PC-3 (cell line): ENCODE measurements at regions of chr7 and their contacts with region 1.

Region 1: DNA sequence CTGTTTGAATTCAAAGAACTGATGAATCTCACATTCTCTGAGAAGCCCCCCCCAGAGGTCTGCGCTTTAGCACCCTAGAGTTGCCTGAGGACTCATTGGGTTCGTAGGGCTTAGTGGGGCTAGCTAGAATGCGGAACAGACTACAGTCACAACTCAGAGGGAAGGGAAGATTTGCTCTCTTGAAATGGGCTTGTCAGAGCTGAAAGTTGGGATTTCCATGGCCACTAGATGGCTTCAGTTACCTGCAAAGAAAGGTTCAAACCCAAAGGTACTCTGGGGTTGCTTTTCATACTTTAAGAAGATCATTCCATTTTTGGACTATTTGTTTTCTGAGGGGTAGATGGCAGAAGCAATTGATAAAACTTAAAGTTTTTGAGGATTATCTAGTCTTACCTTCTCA is 205.0 kb downstream of the BBS9 start:
- DNase-seq: peak; percentile 58
- ATAC-seq: peak; percentile 74
- H3K4me3 ChIP-seq: no peak overlapping the region
- H3K27ac ChIP-seq: no peak overlapping the region
- H3K4me1 ChIP-seq: no peaks in the 10 kb centered on the region
- H3K27me3 ChIP-seq: no peaks in the 10 kb centered on the region
- CTCF ChIP-seq: peak; percentile 75

Region 2: GRCh38 chr7:33040803-33041516 is 293.4 kb before region 1 on chr7:
- CTCF ChIA-PET with region 1: no interaction called
- POLR2A ChIA-PET with region 1: no interaction called
- intact Hi-C with region 1: no loop called
- DNase-seq: peak; percentile 86
- ATAC-seq: peak; percentile 96
- H3K4me3 ChIP-seq: peak overlapping the region; percentile 53
- H3K27ac ChIP-seq: peak overlapping the region; percentile 40
- H3K4me1 ChIP-seq: peaks cover 67% of the 10 kb centered on the region
- H3K27me3 ChIP-seq: no peaks in the 10 kb centered on the region
- CTCF ChIP-seq: no peak

Region 3: GRCh38 chr7:33261585-33261984 is 72.8 kb before region 1 on chr7:
- CTCF ChIA-PET with region 1: no interaction called
- POLR2A ChIA-PET with region 1: no interaction called
- intact Hi-C with region 1: no loop called
- DNase-seq: no peak
- ATAC-seq: peak; percentile 56
- H3K4me3 ChIP-seq: no peak overlapping the region
- H3K27ac ChIP-seq: no peak overlapping the region
- H3K4me1 ChIP-seq: no peaks in the 10 kb centered on the region
- H3K27me3 ChIP-seq: no peaks in the 10 kb centered on the region
- CTCF ChIP-seq: no peak

Region 4: DNA sequence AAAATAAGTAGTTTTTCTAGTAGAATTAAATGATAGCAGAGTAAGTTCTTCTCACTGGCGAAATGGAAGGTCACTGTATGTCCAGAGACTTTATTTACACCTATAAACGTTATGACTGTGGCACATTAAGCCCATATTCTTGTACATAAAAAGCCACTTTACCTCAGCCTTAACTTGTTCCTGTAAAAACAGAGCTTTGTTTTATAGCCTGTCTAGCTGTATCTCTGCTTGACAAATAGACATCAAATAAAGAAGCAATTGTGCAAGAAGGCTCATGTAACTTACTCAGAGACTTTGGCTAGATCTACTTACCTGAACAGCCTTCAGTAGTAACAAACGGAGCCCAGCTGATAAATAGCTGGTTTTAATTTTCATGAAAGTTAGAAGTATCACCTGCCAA is 246.9 kb after region 1 on chr7:
- CTCF ChIA-PET with region 1: no interaction called
- POLR2A ChIA-PET with region 1: no interaction called
- intact Hi-C with region 1: loop called (anchors 10 kb)
- DNase-seq: peak; percentile 15
- ATAC-seq: peak; percentile 70
- H3K4me3 ChIP-seq: no peak overlapping the region
- H3K27ac ChIP-seq: no peak overlapping the region
- H3K4me1 ChIP-seq: peaks cover 11% of the 10 kb centered on the region
- H3K27me3 ChIP-seq: no peaks in the 10 kb centered on the region
- CTCF ChIP-seq: no peak

Region 5: DNA sequence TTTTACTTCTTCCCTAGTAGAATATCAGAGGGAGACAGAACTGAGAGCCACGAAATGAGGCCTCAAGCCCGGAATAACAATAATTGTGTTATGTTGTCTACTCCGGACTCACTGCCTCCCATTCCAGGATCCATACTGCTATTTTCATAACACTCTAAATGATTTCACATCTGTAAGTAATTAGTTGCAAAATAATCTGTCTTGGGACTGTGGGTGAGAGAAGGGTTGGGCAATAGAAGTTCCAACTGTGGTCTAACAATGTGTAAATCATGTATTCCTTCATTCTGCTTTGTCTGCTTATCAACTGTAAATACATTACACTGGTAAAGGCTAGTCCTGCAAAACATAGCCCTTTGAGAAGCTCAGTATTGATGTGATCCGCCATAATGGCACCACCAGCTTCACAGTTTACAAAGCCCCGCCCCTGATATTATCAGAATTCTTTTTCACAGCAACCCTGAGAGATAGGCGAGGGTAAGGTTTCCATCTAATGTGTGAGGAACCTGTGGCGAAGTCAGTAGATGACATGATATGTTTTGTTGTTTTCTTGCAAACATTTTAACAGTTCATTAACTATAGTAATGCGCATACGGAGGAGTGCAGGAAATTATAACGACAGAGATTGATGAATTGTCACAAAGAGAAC is 305.3 kb after region 1 on chr7:
- CTCF ChIA-PET with region 1: no interaction called
- POLR2A ChIA-PET with region 1: no interaction called
- intact Hi-C with region 1: no loop called
- DNase-seq: no peak
- ATAC-seq: no peak
- H3K4me3 ChIP-seq: no peak overlapping the region
- H3K27ac ChIP-seq: no peak overlapping the region
- H3K4me1 ChIP-seq: 0 out of 2 replicates have a peak, but pooled peaks cover 3% of the 10 kb centered on the region
- H3K27me3 ChIP-seq: no peaks in the 10 kb centered on the region
- CTCF ChIP-seq: no peak

Region 6: DNA sequence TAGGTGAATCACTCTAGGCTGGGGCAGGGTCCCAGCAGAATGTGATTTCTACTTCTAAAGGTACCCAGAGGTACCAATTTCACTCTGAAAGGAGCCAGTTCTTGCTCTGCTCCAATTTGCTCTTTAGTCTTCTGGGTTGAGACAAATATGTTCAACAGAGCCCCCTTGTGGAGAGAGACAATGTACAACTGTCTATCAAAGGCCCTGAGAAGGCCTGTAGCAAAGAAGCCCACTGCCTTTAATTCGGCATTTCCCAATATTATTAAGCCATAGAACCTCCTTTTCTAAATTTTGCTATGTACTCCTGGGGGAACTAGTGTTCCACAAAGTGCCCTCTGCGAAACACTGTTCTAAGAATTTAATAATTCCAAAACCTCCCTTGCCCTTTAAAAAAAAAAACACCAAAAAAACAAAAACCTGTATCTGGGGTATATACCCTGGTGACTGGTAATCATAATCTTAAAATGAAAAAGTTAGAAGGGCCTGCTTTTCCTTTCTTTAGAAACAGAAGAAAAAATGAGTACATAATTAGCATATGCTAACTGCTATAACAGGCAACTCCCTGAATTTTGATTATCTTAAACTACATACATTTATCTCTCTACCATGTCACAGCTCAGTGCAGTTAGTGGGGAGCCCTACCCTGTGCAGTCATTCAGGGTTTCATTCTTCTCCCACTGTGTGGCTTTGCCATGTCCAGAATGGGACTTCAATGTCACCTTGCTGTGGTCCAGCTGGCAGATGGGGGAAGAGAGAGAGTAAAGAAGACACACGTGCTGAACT is 410.1 kb after region 1 on chr7:
- CTCF ChIA-PET with region 1: no interaction called
- POLR2A ChIA-PET with region 1: no interaction called
- intact Hi-C with region 1: loop called (anchors 10 kb)
- DNase-seq: peak; percentile 42
- ATAC-seq: peak; percentile 45; the same call in 1 of the 2 replicates
- H3K4me3 ChIP-seq: no peak overlapping the region
- H3K27ac ChIP-seq: no peak overlapping the region
- H3K4me1 ChIP-seq: no peaks in the 10 kb centered on the region
- H3K27me3 ChIP-seq: no peaks in the 10 kb centered on the region
- CTCF ChIP-seq: peak; percentile 55

Region 7: DNA sequence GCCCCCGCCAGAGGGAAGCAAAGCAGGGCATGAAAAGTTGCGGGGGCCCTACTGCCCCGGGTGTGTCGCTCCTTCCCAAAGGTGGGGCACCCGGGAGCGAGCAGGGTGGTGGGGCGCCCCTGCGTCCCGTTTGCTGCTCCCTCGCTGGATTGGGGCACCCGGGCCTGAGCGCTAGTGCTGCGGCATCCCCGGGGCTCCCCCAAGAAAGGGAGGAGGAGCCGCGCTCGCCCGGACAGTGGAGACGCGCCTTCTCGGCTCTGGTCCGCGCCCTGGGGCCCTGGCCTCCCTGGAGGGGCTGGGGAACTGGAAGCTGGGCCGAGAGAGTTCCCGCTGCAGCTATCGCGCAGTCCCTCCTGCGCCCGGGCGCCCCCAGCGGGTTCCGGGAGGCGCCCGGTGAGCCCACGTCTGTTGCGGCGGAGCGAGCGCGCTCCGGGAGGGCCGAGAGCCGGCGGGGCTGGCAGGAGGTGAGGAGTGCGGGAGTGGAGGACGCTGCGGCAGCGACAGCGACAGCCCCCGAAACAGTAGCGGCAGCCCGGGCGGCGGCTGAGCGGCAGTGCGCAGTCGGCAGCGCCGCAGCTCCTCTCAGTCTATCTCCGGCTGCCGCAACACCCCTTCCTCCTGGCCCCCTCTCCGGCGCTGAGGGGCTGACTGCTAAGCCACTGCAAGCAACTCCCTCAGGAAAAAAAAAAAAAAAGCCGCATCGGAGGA is 570.5 kb after region 1 on chr7:
- CTCF ChIA-PET with region 1: no interaction called
- POLR2A ChIA-PET with region 1: no interaction called
- intact Hi-C with region 1: loop called (anchors 10 kb)
- DNase-seq: no peak
- ATAC-seq: no peak
- H3K4me3 ChIP-seq: no peak overlapping the region
- H3K27ac ChIP-seq: no peak overlapping the region
- H3K4me1 ChIP-seq: peaks cover 12% of the 10 kb centered on the region; the same call in 1 of the 2 replicates
- H3K27me3 ChIP-seq: peaks cover 56% of the 10 kb centered on the region
- CTCF ChIP-seq: no peak